Endothelial cell of umbilical vein (primary cell): ENCODE measurements at regions of chr1 and their contacts with region 1.

Region 1: DNA sequence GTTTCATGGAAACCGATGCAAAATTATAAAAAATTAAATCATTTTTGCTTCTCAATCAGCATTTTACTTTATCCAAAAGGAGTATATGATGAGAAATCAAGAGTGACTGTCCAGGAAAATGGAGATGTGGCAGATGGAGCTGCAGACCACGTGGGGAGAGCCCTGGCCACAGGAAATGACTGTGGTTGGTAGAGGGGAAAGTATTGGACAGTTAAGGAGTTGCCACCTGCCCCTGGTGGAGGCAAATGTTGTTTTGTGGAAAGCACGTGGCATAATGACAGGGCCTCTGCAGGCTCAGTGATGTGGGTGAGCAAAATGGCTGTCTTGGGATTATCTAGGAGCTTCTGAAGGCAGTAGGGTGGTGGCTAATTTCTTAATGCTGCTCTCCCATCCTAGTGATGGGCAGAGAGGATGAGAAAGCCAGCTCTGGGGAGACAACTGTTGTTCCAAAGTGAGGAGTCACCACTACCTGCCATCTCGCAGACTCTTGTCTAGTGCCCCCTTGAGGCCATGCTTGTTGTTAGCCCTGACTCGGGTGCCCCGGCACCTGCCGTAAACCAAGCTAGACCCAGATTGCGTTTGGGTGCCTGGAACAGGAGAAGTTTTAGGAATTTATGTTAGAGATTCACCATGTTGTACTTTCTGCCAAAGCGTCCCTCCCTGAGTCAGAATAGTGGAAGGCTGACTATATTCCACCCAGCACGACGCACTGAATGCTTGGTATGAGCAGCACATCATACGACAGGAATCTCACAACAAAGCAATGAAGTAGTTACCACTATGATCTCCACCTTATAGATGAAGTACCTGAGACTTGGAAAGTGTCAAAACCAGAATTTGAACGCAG is 144.0 kb downstream of the ROR1 start:
- DNase-seq: no peak
- H3K4me3 ChIP-seq: no peak overlapping the region
- H3K27ac ChIP-seq: no peak overlapping the region
- H3K4me1 ChIP-seq: peaks cover 17% of the 10 kb centered on the region
- H3K27me3 ChIP-seq: peaks cover 0 to 3% of the 10 kb centered on the region in 2 experiments
- CTCF ChIP-seq: peak; percentile 8 to 10
- POLR2A ChIP-seq: no peak

Region 2: GRCh38 chr1:63615768-63616420 is 301.9 kb before region 1 on chr1:
- CTCF ChIA-PET with region 1: interaction called, 10 read pairs
- POLR2A ChIA-PET with region 1: no interaction called
- dilution Hi-C with region 1: no loop called
- intact Hi-C with region 1: loop called (anchors 5 kb)
- DNase-seq: peak; percentile 82
- H3K4me3 ChIP-seq: no peak overlapping the region
- H3K27ac ChIP-seq: no peak overlapping the region
- H3K4me1 ChIP-seq: no peaks in the 10 kb centered on the region
- H3K27me3 ChIP-seq: no peaks in the 10 kb centered on the region
- CTCF ChIP-seq: peak; percentile 50 to 59
- POLR2A ChIP-seq: no peak

Region 3: GRCh38 chr1:63773815-63774616 is 143.8 kb before region 1 on chr1 and contains the start of gene ROR1:
- CTCF ChIA-PET with region 1: interaction called, 7 read pairs
- POLR2A ChIA-PET with region 1: no interaction called
- dilution Hi-C with region 1: no loop called
- intact Hi-C with region 1: loop called (anchors 1 kb)
- DNase-seq: peak; percentile 86
- H3K4me3 ChIP-seq: peak within 1 kb of the TSS; percentile 62 to 73 (median 72)
- H3K27ac ChIP-seq: peak within 1 kb of the TSS; percentile 40
- H3K4me1 ChIP-seq: peaks cover 15% of the 10 kb centered on the region
- H3K27me3 ChIP-seq: peaks cover 0 to 5% of the 10 kb centered on the region in 2 experiments
- CTCF ChIP-seq: peak; percentile 42 to 80
- POLR2A ChIP-seq: no peak
- total RNA-seq, gene ROR1: 3.5 and 10.9 TPM in 2 replicates

Region 4: DNA sequence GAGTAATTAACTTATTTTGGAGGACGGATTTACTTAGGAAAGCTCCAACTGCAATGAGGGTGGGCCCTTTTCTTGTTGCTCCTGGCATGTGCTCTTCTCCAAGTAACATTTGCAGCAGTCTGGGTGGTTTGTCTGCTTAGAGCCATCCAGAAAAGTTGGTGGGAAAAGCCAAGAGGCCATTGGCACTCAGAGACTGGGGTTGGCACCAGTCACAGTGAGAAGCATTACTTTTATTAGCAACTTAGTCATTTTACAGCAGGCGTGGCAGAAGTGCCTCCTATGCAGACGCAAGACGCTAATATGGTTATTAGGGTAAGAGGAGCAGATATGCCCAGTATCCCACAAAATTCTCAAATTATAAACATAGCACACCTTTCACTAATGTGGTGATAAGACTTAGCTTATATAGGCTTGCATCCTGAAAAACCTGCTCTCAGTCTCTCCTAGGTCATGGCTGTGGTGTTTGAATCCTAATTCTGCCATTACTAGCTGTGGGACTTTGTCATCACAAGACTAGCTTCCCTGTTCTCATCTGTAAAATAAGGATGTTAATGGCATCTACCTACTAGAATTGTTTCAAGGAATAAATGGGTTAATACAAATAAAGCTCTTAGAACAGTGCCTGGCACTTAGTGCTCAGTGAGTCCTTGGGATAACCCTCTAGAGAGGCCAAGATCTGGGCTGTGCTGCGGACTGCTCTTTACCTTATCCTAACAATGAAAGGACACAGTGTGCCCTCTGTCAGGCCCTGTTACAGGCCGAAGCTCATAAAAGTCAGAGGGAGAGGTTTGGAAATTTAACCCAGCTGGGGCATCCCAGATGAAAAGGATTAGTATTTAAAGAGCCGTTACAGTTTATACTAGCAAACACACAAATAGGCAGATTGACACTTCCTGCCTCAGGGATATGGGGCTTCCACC is 10.7 kb after region 1 on chr1:
- CTCF ChIA-PET with region 1: interaction called, 10 read pairs
- POLR2A ChIA-PET with region 1: no interaction called
- dilution Hi-C with region 1: no loop called
- intact Hi-C with region 1: no loop called
- DNase-seq: no peak
- H3K4me3 ChIP-seq: no peak overlapping the region
- H3K27ac ChIP-seq: no peak overlapping the region
- H3K4me1 ChIP-seq: no peaks in the 10 kb centered on the region
- H3K27me3 ChIP-seq: no peaks in the 10 kb centered on the region
- CTCF ChIP-seq: no peak
- POLR2A ChIP-seq: no peak

Region 5: GRCh38 chr1:64038965-64039926 is 121.5 kb after region 1 on chr1:
- CTCF ChIA-PET with region 1: interaction called, 3 read pairs
- POLR2A ChIA-PET with region 1: no interaction called
- dilution Hi-C with region 1: no loop called
- intact Hi-C with region 1: loop called (anchors 5 kb)
- DNase-seq: peak; percentile 84
- H3K4me3 ChIP-seq: no peak overlapping the region
- H3K27ac ChIP-seq: no peak overlapping the region
- H3K4me1 ChIP-seq: peaks cover 6% of the 10 kb centered on the region
- H3K27me3 ChIP-seq: no peaks in the 10 kb centered on the region
- CTCF ChIP-seq: no peak
- POLR2A ChIP-seq: no peak